ENCODE measurements at regions of chr1 and their contacts with region 1.

Region 1: GRCh38 chr1:119449964-119450363 is 35.0 kb downstream of the HSD3B2 start:
- DNase-seq: peak; percentile 71
- ATAC-seq: peak; percentile 97
- H3K4me3 Mint-ChIP-seq: no peak overlapping the region
- H3K27ac Mint-ChIP-seq: no peak overlapping the region
- H3K4me1 Mint-ChIP-seq: peaks cover 15% of the 10 kb centered on the region
- H3K27me3 Mint-ChIP-seq: peaks cover 4% of the 10 kb centered on the region
- CTCF ChIP-seq: no peak

Region 2: GRCh38 chr1:119140177-119141019 is 309.6 kb before region 1 on chr1 and contains the start of gene WARS2:
- CTCF ChIA-PET with region 1: no interaction called
- POLR2A ChIA-PET with region 1: no interaction called
- DNase-seq: peak; percentile 94
- ATAC-seq: peak; percentile 96
- H3K4me3 Mint-ChIP-seq: no peak within 1 kb of the TSS
- H3K27ac Mint-ChIP-seq: no peak within 1 kb of the TSS
- H3K4me1 Mint-ChIP-seq: peaks cover 10% of the 10 kb centered on the region
- H3K27me3 Mint-ChIP-seq: no peaks in the 10 kb centered on the region
- CTCF ChIP-seq: no peak
- total RNA-seq, gene WARS2: 9.3 to 12.2 TPM (median 9.7 TPM) in 3 replicates

Region 3: DNA sequence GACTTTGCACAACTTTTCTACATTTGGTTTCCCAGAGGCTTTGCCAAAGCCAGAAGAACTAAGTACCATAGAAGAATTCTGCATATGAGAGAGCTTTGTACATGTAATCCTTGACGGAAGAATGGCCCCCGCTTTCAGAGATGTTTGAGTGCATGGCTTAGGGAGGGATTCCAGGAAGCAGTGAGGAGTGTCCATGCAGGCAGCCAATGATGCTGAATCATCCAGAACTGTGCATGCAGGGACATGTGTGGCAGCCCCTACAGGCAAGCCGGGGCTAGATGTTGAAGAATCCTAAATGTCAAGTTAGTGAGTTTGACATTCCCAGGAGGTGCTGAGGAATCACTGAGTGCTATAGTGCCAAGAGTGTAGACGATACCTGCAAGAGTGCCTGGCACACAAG is 91.3 kb before region 1 on chr1:
- CTCF ChIA-PET with region 1: no interaction called
- POLR2A ChIA-PET with region 1: no interaction called
- DNase-seq: no peak
- ATAC-seq: no peak
- H3K4me3 Mint-ChIP-seq: no peak overlapping the region
- H3K27ac Mint-ChIP-seq: no peak overlapping the region
- H3K4me1 Mint-ChIP-seq: peaks cover 38% of the 10 kb centered on the region
- H3K27me3 Mint-ChIP-seq: peaks cover 7% of the 10 kb centered on the region
- CTCF ChIP-seq: no peak

Region 4: DNA sequence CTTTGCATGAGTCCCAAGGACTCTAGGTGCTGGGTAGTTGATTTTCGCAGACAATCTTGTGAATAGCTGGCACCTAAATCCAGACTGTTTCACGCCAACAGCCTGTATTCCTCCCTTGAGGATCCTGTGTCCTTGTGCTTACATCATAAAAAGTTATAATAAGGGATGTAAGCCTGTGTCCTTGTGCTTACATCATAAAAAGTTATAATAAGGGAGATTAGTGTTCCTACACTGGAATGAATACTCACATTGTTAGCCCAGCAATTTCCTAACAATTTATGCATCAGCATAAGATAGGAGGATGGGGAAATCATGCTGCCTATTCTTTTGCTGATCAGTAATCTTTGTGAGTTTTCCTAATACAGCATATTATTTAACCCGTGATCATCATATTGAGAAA is 39.0 kb before region 1 on chr1:
- CTCF ChIA-PET with region 1: no interaction called
- POLR2A ChIA-PET with region 1: no interaction called
- DNase-seq: no peak
- ATAC-seq: no peak
- H3K4me3 Mint-ChIP-seq: no peak overlapping the region
- H3K27ac Mint-ChIP-seq: no peak overlapping the region
- H3K4me1 Mint-ChIP-seq: no peaks in the 10 kb centered on the region
- H3K27me3 Mint-ChIP-seq: no peaks in the 10 kb centered on the region; the same call in 1 of the 2 replicates
- CTCF ChIP-seq: no peak

Region 5: GRCh38 chr1:119475866-119476439 is 26.0 kb after region 1 on chr1:
- CTCF ChIA-PET with region 1: interaction called, 12 read pairs
- POLR2A ChIA-PET with region 1: no interaction called
- DNase-seq: peak; percentile 88
- ATAC-seq: peak; percentile 96
- H3K4me3 Mint-ChIP-seq: no peak overlapping the region
- H3K27ac Mint-ChIP-seq: no peak overlapping the region
- H3K4me1 Mint-ChIP-seq: peaks cover 6% of the 10 kb centered on the region
- H3K27me3 Mint-ChIP-seq: peaks cover 2% of the 10 kb centered on the region; the same call in 1 of the 2 replicates
- CTCF ChIP-seq: peak; percentile 64

Region 6: DNA sequence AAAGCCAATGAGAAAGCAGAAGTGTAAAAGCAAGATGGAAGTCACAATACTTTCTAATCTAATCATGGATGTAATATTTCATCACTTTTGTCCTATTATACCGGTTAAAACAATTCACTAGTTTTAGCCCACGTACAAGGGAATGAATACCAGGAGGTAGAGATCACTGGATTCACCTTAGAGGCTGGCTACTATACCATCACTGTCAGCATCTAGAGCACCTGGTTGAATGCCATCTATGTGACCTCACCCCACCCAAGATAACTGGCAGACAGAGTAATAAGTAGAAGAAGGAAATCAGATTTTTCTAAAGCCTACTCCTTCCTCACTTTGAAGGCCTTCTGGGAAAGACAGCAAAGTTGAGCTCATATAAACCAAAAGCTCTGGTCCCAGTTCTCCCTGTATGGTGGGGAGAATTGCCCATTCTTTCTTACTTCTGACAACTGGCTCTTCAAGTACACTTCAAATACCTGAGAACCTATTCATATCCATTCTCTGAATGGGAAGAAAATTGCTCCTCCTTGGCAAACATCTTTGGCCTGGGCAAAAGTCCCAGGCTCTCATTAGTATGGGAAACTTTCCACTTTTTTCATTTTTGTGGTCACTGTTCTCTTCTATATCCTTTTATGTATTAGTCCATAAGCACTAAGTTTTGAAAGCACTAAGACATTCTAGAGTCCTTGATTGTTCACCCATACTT is 81.8 kb after region 1 on chr1:
- CTCF ChIA-PET with region 1: no interaction called
- POLR2A ChIA-PET with region 1: no interaction called
- DNase-seq: no peak
- ATAC-seq: no peak
- H3K4me3 Mint-ChIP-seq: no peak overlapping the region
- H3K27ac Mint-ChIP-seq: no peak overlapping the region
- H3K4me1 Mint-ChIP-seq: no peaks in the 10 kb centered on the region
- H3K27me3 Mint-ChIP-seq: peaks cover 9% of the 10 kb centered on the region
- CTCF ChIP-seq: no peak